OCI-LY7 (cell line): ENCODE measurements at regions of chr11 and their contacts with region 1.

Region 1: GRCh38 chr11:57345555-57346211 is 7.5 kb downstream of the P2RX3 start:
- DNase-seq: peak; percentile 77
- H3K4me3 ChIP-seq: no peak overlapping the region
- H3K27ac ChIP-seq: no peak overlapping the region
- H3K4me1 ChIP-seq: peaks cover 4% of the 10 kb centered on the region
- CTCF ChIP-seq: peak; percentile 84

Region 2: DNA sequence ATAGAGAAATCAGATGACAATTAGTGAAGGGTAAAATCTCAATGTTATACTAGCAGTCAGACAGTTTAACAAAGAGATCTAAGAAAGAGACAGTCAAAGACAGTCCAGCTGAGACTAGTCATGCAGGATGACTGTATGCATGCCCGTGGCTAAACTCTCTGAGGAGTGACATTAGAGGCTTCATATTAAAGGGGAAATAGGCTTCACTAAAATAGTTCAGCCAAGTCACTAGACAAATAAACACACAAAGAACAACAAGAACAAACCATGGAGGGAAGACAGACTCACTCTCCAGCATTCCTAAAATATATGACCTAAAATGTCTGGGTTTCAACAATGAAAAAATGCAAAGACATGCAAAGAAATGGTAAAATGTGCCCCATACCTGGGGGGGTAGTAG is 90.1 kb before region 1 on chr11:
- CTCF ChIA-PET with region 1: interaction called, 11 read pairs
- POLR2A ChIA-PET with region 1: no interaction called
- intact Hi-C with region 1: no loop called
- DNase-seq: no peak
- H3K4me3 ChIP-seq: no peak overlapping the region
- H3K27ac ChIP-seq: no peak overlapping the region
- H3K4me1 ChIP-seq: no peaks in the 10 kb centered on the region
- CTCF ChIP-seq: no peak

Region 3: DNA sequence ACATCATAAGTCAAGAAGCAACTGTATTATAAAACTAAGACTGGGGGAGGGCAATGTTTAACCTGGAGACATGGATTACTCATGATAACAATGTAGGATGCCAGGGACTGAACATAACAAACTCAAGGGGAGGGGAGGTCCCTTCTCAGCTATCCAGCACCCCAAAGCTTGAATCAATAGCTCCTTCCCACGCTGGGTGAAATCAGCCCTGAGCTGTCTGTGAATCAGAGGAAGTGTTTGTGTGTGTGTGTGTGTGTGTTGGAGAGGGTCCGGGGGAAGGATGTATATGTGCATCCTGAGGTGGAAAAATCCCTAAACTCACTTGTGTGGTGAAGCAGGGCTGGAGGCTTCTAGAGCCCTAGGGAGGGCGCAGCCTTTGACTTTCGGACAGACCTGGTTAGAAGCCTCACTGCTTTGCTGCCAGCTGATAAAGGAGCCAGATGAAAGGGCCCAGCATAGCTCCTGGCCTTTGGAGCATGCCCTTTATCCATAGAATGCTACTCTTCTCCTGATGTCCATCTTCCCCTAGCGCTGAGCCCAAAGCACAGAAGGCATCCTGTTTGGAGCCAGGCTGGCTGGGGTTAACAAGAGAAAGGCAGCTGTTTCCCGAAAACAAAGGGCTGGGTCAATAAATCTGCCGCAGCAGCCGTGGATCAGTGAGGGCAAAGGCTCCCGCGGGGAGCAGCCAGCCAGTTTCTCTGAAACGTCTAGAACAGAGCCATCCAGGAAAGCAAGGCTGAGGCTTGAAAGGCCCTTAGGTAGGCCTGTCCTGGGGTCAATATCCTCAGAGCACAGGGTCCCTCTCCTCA is 56.7 kb before region 1 on chr11:
- CTCF ChIA-PET with region 1: no interaction called
- POLR2A ChIA-PET with region 1: no interaction called
- intact Hi-C with region 1: no loop called
- DNase-seq: no peak
- H3K4me3 ChIP-seq: no peak overlapping the region
- H3K27ac ChIP-seq: no peak overlapping the region
- H3K4me1 ChIP-seq: no peaks in the 10 kb centered on the region
- CTCF ChIP-seq: no peak

Region 4: GRCh38 chr11:57399221-57399620 is 53.5 kb after region 1 on chr11:
- CTCF ChIA-PET with region 1: no interaction called
- POLR2A ChIA-PET with region 1: no interaction called
- intact Hi-C with region 1: no loop called
- DNase-seq: no peak
- H3K4me3 ChIP-seq: no peak overlapping the region
- H3K27ac ChIP-seq: no peak overlapping the region
- H3K4me1 ChIP-seq: no peaks in the 10 kb centered on the region
- CTCF ChIP-seq: no peak

Region 5: DNA sequence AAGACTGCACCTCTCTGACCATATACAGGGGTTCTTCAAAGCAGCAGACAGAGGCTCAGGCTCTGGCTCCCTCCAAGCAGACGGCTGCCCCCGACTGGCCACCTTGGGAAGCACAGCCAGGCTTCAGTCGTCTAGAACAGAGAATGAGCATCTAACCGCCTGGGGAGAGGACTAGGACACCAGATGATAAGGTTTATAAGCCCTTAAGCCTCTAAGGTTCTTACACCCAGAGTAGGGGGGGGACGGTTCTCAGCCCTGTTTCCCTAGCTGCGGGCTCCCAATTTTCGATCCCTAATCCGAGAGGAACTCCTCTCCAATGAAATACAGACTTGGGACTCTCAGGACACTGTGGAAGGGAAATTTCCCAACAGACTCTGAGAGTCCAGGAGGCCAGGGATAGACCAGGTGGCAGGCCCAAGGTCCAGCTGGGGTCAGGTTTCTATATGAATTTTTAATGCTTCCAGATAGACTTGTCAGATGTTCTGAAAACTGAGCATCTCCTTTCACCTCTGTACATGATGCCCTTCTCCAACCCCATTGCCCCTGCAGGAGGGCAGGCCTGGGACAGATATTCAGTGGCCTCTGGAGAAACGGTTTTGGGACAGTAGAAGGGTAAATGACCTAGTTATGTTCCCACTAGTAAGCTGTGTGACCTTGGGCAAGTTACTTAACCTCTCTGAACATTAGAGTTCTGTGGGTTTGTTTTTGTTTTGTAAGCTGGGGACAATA is 134.9 kb after region 1 on chr11:
- CTCF ChIA-PET with region 1: no interaction called
- POLR2A ChIA-PET with region 1: no interaction called
- intact Hi-C with region 1: loop called (anchors 1 kb)
- DNase-seq: peak; percentile 74
- H3K4me3 ChIP-seq: no peak overlapping the region
- H3K27ac ChIP-seq: no peak overlapping the region
- H3K4me1 ChIP-seq: peaks cover 73% of the 10 kb centered on the region
- CTCF ChIP-seq: peak; percentile 86